AG04449 (cell line): ENCODE measurements at regions of chr12 and their contacts with region 1.

Region 1: GRCh38 chr12:122471324-122472226 is 29.2 kb downstream of the ZCCHC8 start:
- DNase-seq: no peak
- H3K4me3 ChIP-seq: no peak overlapping the region
- CTCF ChIP-seq: peak; percentile 59

Region 2: GRCh38 chr12:122449353-122449752 is 22.2 kb before region 1 on chr12:
- CTCF ChIA-PET with region 1: interaction called, 59 read pairs
- POLR2A ChIA-PET with region 1: no interaction called
- DNase-seq: peak; percentile 70
- H3K4me3 ChIP-seq: no peak overlapping the region
- CTCF ChIP-seq: no peak

Region 3: GRCh38 chr12:122459211-122459610 is 12.4 kb before region 1 on chr12:
- CTCF ChIA-PET with region 1: interaction called, 59 read pairs
- POLR2A ChIA-PET with region 1: no interaction called
- DNase-seq: no peak
- H3K4me3 ChIP-seq: no peak overlapping the region
- CTCF ChIP-seq: no peak

Region 4: DNA sequence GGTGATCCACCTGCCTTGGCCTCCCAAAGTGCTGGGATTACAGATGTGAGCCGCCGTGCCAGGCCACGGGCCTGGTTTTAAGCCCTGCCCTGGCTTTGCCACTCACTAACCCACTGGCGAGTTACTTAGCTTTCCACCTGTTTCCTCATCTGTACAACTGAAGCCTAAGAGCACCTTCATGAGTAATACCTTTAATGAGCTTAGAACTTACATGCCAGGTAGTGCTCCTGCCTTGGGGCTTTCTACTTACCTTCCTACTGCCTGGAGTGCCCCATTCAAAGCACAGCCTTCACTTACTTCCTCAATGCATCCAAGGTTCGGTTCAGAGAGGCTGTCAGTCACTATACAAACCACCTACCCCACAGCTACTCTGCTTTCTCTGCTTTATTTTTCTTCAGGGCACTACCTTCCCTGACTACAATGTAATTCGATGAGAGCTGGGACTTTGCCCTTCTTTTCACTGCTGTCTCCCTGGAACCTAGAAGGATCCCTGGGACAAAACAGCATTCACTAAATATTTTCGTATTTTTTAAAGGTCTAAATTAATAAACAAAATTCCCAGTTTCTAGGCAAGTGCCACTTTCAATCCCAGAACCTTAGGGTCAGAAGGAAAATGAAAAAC is 15.3 kb after region 1 on chr12:
- CTCF ChIA-PET with region 1: interaction called, 44 read pairs
- POLR2A ChIA-PET with region 1: no interaction called
- DNase-seq: no peak
- H3K4me3 ChIP-seq: no peak overlapping the region
- CTCF ChIP-seq: no peak

Region 5: DNA sequence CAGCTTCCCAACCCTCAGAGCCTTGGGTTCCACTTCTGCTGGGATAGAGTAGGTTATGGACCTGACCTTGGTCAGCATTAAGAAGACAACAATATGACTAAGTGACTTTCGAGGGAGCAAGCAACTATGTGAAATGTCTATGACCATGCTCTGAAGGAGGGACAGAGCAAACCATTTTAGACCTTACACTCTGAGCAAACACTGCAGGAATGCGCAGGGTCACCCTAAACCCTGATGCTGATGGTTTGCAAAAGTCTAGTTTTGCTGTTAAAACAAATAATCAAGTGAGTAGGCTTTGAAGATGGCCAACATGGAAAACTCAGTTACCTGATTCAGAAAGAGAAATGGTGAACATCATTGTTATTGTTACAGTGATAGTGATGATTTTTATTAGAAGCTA is 20.4 kb after region 1 on chr12:
- CTCF ChIA-PET with region 1: interaction called, 44 read pairs
- POLR2A ChIA-PET with region 1: no interaction called
- DNase-seq: no peak
- H3K4me3 ChIP-seq: no peak overlapping the region
- CTCF ChIP-seq: no peak

Region 6: GRCh38 chr12:122500685-122501488 is 29.3 kb after region 1 on chr12 and contains the start of gene ZCCHC8:
- CTCF ChIA-PET with region 1: interaction called, 11 read pairs
- POLR2A ChIA-PET with region 1: no interaction called
- DNase-seq: peak; percentile 91
- H3K4me3 ChIP-seq: peak within 1 kb of the TSS; percentile 89
- CTCF ChIP-seq: no peak